Colonic mucosa (tissue), 4 donors: ENCODE measurements at regions of chr18 and their contacts with region 1.

Region 1: DNA sequence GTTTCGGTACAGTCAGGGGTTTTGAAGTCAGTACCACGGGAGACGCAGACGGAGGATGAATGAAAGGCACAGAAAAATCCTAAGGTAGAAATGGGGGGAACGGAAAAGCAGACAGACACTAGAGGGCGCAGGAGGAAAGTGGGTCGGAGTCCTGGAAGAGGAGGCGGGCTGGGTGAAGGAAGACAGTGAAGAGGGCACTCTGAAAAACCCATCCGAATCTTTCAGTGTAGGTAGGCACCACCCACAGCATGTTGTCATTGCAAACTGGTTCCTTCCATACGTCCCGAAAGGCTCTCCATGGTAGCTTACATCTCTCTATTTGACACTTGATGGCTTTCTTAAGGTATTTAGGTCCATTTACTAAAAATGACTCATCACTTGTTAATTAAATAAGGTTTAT is 18.5 kb upstream of the ZNF236 start:
- DNase-seq: peak; percentile 82
- H3K4me3 ChIP-seq: no peak overlapping the region
- H3K27ac ChIP-seq: peak overlapping the region; percentile 45
- H3K4me1 ChIP-seq: no peaks in the 10 kb centered on the region
- H3K27me3 ChIP-seq: no peaks in the 10 kb centered on the region
- CTCF ChIP-seq: peak; percentile 78

Region 2: GRCh38 chr18:76697441-76697901 is 106.3 kb before region 1 on chr18:
- intact Hi-C with region 1: no loop called
- DNase-seq: no peak
- H3K4me3 ChIP-seq: no peak overlapping the region
- H3K27ac ChIP-seq: no peak overlapping the region
- H3K4me1 ChIP-seq: no peaks in the 10 kb centered on the region
- H3K27me3 ChIP-seq: no peaks in the 10 kb centered on the region
- CTCF ChIP-seq: no peak

Region 3: DNA sequence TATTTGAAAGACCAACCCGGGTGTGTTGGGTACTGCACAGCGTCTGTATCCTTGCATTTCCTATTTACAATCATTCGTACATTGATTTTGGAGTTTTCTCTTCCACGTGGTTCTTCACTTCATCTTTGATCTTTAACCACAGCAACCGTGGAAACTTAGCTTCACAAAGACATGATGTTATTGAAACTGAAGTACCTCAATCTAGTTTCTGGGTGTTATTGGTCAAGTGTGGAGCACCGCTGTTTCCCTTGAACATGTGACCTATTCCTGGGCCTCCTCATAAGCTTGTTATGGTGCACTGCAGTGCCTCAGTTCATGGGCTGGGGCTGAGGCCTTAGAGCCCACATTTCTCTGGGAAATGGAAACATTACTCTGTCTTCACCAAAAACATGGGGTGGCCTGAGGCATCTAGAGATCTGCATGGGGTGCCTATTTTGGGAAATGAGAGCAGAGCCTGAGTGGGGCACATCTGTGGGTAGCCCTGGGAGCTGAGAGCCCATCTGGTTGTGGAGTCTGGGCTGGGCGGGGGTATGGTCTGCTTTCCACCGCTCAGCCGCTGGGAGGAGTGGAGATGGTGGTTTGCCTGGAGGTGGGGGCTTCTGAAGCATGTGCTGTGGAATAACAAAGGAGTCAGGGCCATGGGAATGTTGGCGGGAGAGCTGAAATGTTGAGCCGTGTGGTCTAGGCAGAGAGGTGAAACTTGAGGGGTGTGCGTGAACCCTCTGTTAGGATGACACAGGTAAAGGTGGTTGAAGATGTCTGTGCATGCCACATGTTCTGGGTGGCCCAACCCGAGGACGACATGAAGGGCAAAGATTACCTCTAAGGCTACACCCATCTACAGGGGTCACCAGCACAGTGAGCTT is 55.9 kb after region 1 on chr18:
- intact Hi-C with region 1: loop called (anchors 10 kb)
- DNase-seq: no peak
- H3K4me3 ChIP-seq: no peak overlapping the region
- H3K27ac ChIP-seq: no peak overlapping the region
- H3K4me1 ChIP-seq: no peaks in the 10 kb centered on the region
- H3K27me3 ChIP-seq: no peaks in the 10 kb centered on the region
- CTCF ChIP-seq: no peak

Region 4: GRCh38 chr18:76922107-76922506 is 118.3 kb after region 1 on chr18:
- intact Hi-C with region 1: loop called (anchors 5 kb)
- DNase-seq: peak; percentile 59
- H3K4me3 ChIP-seq: no peak overlapping the region
- H3K27ac ChIP-seq: no peak overlapping the region
- H3K4me1 ChIP-seq: no peaks in the 10 kb centered on the region
- H3K27me3 ChIP-seq: no peaks in the 10 kb centered on the region
- CTCF ChIP-seq: peak; percentile 49

Region 5: DNA sequence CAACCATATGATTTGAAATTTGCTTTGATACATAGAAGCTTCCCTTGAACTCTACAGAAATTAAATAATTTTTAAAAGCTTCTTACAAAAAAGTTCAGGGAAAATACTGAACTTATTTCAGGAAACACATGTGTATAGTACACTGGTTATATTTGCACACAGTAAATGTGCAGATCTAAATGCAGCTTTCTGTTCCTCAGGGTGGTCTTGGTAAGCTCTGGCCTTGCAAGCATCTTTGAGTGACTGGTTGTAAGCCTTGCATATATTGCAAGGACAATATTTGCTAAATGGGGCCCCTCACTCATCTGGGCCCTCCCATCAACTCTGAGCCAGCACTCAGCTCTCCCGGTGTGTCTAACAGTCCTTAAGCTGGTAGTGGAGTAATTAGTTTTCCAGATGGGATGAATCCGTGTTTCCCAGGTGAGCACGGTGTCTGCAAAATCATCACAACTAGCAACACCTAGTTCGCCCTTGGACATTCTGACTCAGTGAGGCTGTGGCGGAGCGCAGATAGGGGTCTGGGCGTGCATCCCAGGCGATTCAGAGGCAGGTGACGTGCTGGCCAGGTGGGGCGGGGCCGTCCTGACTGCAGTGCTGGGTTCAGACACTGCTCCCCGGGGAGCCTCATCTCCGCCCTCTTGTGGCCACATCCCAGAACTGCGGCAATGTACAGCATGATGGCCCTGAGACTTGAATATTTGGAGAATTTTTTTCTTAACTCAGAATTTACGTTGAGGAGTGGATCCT is 179.2 kb after region 1 on chr18:
- intact Hi-C with region 1: loop called (anchors 5 kb)
- DNase-seq: peak; percentile 96
- H3K4me3 ChIP-seq: no peak overlapping the region
- H3K27ac ChIP-seq: no peak overlapping the region
- H3K4me1 ChIP-seq: peaks cover 3% of the 10 kb centered on the region
- H3K27me3 ChIP-seq: no peaks in the 10 kb centered on the region
- CTCF ChIP-seq: peak; percentile 91